ENCODE measurements at regions of chr17 and their contacts with region 1.

Region 1: DNA sequence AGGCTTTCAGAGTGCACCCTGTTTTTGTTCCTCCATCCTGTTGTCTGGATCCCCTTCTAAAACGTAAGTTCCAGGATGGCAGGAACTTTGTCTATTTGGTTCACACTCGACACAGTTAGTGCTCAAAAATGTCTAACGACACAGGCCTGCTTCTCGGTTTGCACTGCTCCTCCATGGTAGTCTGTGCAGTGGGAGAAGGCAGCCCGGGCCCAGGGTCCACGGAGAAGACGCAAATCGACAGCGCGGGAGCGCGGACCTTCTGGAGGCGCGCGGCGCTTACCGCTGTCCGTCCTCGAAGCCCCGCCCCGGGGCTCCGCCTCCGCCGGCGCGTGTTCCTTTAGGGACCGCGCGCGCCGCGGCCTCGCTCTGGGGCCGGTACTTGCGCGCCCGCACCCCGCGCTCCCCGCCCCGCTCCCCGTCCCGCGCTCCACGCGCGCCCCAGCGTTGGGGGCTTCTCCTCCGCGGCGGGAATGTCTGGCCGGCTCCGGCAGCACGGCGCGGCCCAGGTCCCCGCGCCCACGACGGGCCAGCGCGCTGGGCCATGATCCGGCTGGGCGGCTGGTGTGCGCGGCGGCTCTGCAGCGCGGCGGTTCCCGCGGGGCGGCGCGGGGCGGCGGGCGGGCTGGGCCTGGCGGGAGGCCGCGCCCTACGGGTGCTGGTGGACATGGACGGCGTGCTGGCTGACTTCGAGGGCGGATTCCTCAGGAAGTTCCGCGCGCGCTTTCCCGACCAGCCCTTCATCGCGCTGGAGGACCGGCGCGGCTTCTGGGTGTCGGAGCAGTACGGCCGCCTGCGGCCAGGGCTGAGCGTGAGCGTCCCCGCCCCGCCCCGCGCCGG is at the start of gene NT5M:
- DNase-seq: peak; percentile 72
- H3K4me3 Mint-ChIP-seq: peak within 1 kb of the TSS; percentile 90
- H3K27ac Mint-ChIP-seq: peak within 1 kb of the TSS; percentile 97
- H3K4me1 Mint-ChIP-seq: peaks cover 36% of the 10 kb centered on the region
- H3K27me3 Mint-ChIP-seq: no peaks in the 10 kb centered on the region
- total RNA-seq, gene NT5M: 5.1 and 5.8 TPM in 2 replicates

Region 2: DNA sequence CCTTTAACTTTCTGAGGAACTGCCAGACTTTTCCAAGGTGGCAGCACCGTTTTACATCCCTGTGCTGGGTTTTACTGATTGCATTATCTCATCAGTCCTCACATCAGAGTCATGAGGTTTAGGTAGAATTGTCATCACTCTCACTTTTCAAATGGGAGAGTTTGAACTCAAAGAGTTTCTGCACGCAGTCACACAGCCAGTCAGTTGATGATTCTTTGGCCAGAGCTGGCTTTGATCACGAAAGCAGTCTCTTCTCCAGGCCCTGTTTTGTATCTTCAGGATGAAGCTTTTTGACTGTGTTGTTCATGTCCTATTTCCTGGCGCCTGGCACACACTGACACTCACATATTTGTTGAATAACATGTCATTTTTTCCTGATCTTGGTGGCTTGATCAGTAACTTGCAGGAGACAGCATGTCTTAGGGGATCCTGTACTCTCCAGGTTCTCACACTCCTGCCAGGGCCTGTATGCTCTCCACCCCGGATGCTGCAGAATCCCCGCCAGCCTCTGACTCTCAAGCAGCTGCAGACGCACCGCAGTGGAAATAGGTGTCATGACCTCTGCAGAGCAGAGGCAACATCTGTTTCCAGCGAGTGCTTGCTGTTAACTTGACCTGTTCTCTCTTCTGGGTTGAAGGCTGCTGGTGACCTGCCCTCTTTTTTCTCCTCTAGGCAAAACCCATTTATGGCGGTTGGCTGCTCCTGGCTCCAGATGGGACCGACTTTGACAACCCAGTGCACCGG is 228.0 kb before region 1 on chr17:
- intact Hi-C with region 1: no loop called
- DNase-seq: no peak
- H3K4me3 Mint-ChIP-seq: no peak overlapping the region
- H3K27ac Mint-ChIP-seq: no peak overlapping the region
- H3K4me1 Mint-ChIP-seq: peaks cover 49% of the 10 kb centered on the region
- H3K27me3 Mint-ChIP-seq: no peaks in the 10 kb centered on the region

Region 3: GRCh38 chr17:17151962-17152361 is 151.3 kb before region 1 on chr17:
- intact Hi-C with region 1: loop called (anchors 2 kb)
- DNase-seq: no peak
- H3K4me3 Mint-ChIP-seq: no peak overlapping the region
- H3K27ac Mint-ChIP-seq: peak overlapping the region; percentile 68
- H3K4me1 Mint-ChIP-seq: peaks cover 56% of the 10 kb centered on the region
- H3K27me3 Mint-ChIP-seq: no peaks in the 10 kb centered on the region

Region 4: DNA sequence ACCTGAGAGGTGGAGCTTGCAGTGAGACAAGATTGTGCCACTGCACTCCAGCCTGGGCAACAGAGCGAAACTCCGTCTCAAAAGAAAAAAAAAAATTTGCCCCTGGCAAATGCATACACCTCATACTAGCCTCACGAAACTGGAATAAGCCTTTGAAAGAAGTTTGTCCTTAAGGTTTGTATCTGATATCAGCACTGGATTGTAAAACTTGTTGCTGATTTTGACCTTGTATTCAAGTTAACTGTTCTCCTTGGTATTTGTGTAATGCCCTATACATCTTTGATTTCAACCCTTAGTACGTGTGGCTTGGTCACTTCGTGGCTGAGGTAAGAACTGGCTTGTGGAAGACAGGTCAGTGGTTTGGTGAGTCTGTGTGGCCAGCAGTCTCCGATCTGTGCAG is 60.1 kb before region 1 on chr17:
- intact Hi-C with region 1: no loop called
- DNase-seq: no peak
- H3K4me3 Mint-ChIP-seq: no peak overlapping the region
- H3K27ac Mint-ChIP-seq: no peak overlapping the region
- H3K4me1 Mint-ChIP-seq: peaks cover 8% of the 10 kb centered on the region
- H3K27me3 Mint-ChIP-seq: no peaks in the 10 kb centered on the region

Region 5: GRCh38 chr17:17269926-17270773 is 33.1 kb before region 1 on chr17:
- intact Hi-C with region 1: loop called (anchors 5 kb)
- DNase-seq: no peak
- H3K4me3 Mint-ChIP-seq: no peak overlapping the region
- H3K27ac Mint-ChIP-seq: no peak overlapping the region
- H3K4me1 Mint-ChIP-seq: no peaks in the 10 kb centered on the region
- H3K27me3 Mint-ChIP-seq: no peaks in the 10 kb centered on the region

Region 6: GRCh38 chr17:17313350-17313991 is 10.2 kb after region 1 on chr17:
- intact Hi-C with region 1: loop called (anchors 1 kb)
- DNase-seq: peak; percentile 66
- H3K4me3 Mint-ChIP-seq: no peak overlapping the region
- H3K27ac Mint-ChIP-seq: no peak overlapping the region
- H3K4me1 Mint-ChIP-seq: peaks cover 6% of the 10 kb centered on the region
- H3K27me3 Mint-ChIP-seq: no peaks in the 10 kb centered on the region

Region 7: GRCh38 chr17:18038861-18039534 is 735.8 kb after region 1 on chr17 and contains the starts of genes ATPAF2 and GID4:
- intact Hi-C with region 1: no loop called
- DNase-seq: peak; percentile 100
- H3K4me3 Mint-ChIP-seq: peak within 1 kb of the TSS; percentile 100
- H3K27ac Mint-ChIP-seq: peak within 1 kb of the TSS; percentile 99
- H3K4me1 Mint-ChIP-seq: peaks cover 43% of the 10 kb centered on the region
- H3K27me3 Mint-ChIP-seq: no peaks in the 10 kb centered on the region
- total RNA-seq, gene ATPAF2: 34.9 and 37.8 TPM in 2 replicates
- total RNA-seq, gene GID4: 9.6 and 10.0 TPM in 2 replicates